CD8-positive, alpha-beta T cell (primary cell): ENCODE measurements at regions of chr3 and their contacts with region 1.

Region 1: DNA sequence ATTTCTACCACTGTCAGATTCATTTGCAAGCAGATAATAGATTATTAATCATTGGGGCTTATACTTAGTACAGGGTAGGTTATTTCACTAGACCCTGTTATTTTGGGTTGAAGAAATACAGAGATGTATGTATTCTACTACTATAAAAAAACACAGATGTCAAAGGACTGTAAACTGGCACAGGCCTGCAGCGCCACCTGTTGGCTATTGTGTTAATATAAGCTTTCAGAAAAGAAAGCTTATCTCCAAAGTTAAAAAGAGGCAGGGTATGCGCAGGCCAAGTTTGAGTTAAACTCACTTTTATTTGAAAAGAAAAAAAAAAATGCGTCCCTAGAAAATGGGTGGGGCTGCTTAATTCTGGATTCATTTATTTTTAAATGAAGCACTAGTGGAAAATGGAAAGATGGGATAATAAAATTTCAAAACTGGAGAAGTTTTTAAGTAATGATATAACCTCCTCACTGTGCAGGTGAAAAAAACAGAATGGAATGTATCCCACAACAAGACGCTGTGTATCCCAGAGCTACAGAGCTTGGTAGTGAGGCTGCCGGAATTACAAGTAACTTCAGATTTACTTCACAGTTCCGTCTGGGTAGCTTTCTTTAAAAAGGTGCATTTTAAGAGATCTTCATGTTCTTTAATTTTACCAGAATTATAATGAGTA is 407.2 kb upstream of the TGFBR2 start:
- DNase-seq: peak; percentile 35 to 79 (median 65)
- ATAC-seq: peak; percentile 46
- H3K4me3 ChIP-seq: no peak overlapping the region
- H3K4me3 Mint-ChIP-seq: no peak overlapping the region
- H3K27ac ChIP-seq: no peak overlapping the region
- H3K27ac Mint-ChIP-seq: no peak overlapping the region
- H3K4me1 ChIP-seq: no peaks in the 10 kb centered on the region
- H3K4me1 Mint-ChIP-seq: no peaks in the 10 kb centered on the region
- H3K27me3 ChIP-seq: no peaks in the 10 kb centered on the region
- H3K27me3 Mint-ChIP-seq: no peaks in the 10 kb centered on the region
- CTCF ChIP-seq: peak; percentile 97

Region 2: GRCh38 chr3:28667646-28668621 is 1531.3 kb before region 1 on chr3:
- CTCF ChIA-PET with region 1: no interaction called
- POLR2A ChIA-PET with region 1: no interaction called
- intact Hi-C with region 1: loop called in 1 of 2 experiments (anchors 5 kb)
- DNase-seq: peak in 6 of 9 experiments; percentile 22 to 50 (median 29)
- ATAC-seq: peak; percentile 29
- H3K4me3 ChIP-seq: no peak overlapping the region
- H3K4me3 Mint-ChIP-seq: no peak overlapping the region
- H3K27ac ChIP-seq: no peak overlapping the region
- H3K27ac Mint-ChIP-seq: no peak overlapping the region
- H3K4me1 ChIP-seq: no peaks in the 10 kb centered on the region
- H3K4me1 Mint-ChIP-seq: no peaks in the 10 kb centered on the region
- H3K27me3 ChIP-seq: no peaks in the 10 kb centered on the region
- H3K27me3 Mint-ChIP-seq: peaks cover 7% of the 10 kb centered on the region
- CTCF ChIP-seq: peak; percentile 62

Region 3: GRCh38 chr3:30012941-30013543 is 186.2 kb before region 1 on chr3:
- CTCF ChIA-PET with region 1: interaction called, 5 read pairs
- POLR2A ChIA-PET with region 1: no interaction called
- intact Hi-C with region 1: loop called in 1 of 2 experiments (anchors 10 kb)
- DNase-seq: peak; percentile 7 to 60 (median 53)
- ATAC-seq: no peak
- H3K4me3 ChIP-seq: no peak overlapping the region
- H3K4me3 Mint-ChIP-seq: no peak overlapping the region
- H3K27ac ChIP-seq: no peak overlapping the region
- H3K27ac Mint-ChIP-seq: no peak overlapping the region
- H3K4me1 ChIP-seq: no peaks in the 10 kb centered on the region
- H3K4me1 Mint-ChIP-seq: no peaks in the 10 kb centered on the region
- H3K27me3 ChIP-seq: no peaks in the 10 kb centered on the region
- H3K27me3 Mint-ChIP-seq: peaks cover 5% of the 10 kb centered on the region
- CTCF ChIP-seq: peak; percentile 72

Region 4: GRCh38 chr3:30112902-30113484 is 86.2 kb before region 1 on chr3:
- CTCF ChIA-PET with region 1: interaction called, 31 read pairs
- POLR2A ChIA-PET with region 1: no interaction called
- intact Hi-C with region 1: loop called (anchors 1 to 2 kb)
- DNase-seq: peak in 2 of 9 experiments; percentile 43 to 61
- ATAC-seq: no peak
- H3K4me3 ChIP-seq: no peak overlapping the region
- H3K4me3 Mint-ChIP-seq: no peak overlapping the region
- H3K27ac ChIP-seq: no peak overlapping the region
- H3K27ac Mint-ChIP-seq: no peak overlapping the region
- H3K4me1 ChIP-seq: no peaks in the 10 kb centered on the region
- H3K4me1 Mint-ChIP-seq: peaks cover 6% of the 10 kb centered on the region
- H3K27me3 ChIP-seq: no peaks in the 10 kb centered on the region
- H3K27me3 Mint-ChIP-seq: no peaks in the 10 kb centered on the region
- CTCF ChIP-seq: peak; percentile 78

Region 5: DNA sequence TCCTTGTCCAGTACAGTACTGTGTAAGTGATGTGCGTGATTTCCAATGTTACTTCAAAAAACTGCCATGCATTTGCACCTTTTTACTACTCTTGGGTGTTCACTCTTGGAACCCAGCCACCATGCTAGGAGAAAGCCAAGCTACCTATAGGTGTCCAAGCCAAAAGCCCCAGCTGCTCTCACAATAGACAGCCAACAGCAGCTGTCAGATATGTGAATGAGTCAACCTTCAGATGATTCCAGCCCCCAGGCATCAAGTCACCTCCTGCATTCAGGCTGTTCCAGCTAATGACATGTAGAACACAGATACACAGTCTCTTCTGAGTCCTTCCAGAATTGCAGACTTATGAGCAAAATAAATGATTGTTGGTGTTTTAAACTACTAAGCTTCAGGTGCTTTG is 10.5 kb before region 1 on chr3:
- CTCF ChIA-PET with region 1: interaction called, 21 read pairs
- POLR2A ChIA-PET with region 1: interaction called, 5 read pairs
- intact Hi-C with region 1: no loop called
- DNase-seq: no peak
- ATAC-seq: no peak
- H3K4me3 ChIP-seq: no peak overlapping the region
- H3K4me3 Mint-ChIP-seq: no peak overlapping the region
- H3K27ac ChIP-seq: no peak overlapping the region
- H3K27ac Mint-ChIP-seq: no peak overlapping the region
- H3K4me1 ChIP-seq: no peaks in the 10 kb centered on the region
- H3K4me1 Mint-ChIP-seq: no peaks in the 10 kb centered on the region
- H3K27me3 ChIP-seq: no peaks in the 10 kb centered on the region
- H3K27me3 Mint-ChIP-seq: peaks cover 3% of the 10 kb centered on the region
- CTCF ChIP-seq: no peak

Region 6: DNA sequence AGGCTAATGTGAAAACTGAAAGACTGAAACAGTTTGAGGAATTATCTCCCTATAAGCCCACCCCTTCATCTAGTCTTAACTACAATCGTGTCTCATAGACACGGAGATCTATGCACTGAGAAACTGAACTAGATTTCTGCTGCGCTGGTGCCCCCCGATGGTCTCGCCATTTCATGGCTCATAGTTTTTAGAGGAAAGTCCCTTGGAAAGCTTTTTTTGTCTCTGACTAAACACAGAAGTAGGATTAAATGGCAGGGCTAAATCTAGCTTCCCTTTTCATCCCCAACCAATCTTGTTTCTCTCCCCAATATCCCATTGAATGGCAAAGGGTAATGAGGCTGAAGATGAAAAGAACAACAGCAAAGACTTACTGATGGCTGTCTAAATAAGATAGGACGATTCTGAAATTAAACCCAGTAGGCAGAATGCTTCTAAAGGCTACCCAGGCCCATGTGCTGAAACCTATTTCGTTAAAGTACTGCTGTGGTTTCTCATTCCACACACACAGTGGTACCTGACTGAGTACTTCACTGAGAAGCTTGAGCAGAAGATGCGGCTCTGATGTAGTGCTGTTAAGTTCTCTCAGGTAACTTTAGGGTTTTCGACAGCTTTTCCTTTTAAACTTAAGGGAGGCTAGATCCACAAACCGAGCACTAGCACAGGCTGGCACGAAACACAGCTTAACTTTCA is 552.5 kb after region 1 on chr3:
- CTCF ChIA-PET with region 1: interaction called, 16 read pairs
- POLR2A ChIA-PET with region 1: no interaction called
- intact Hi-C with region 1: loop called in 1 of 2 experiments (anchors 2 kb)
- DNase-seq: peak; percentile 25 to 76 (median 61)
- ATAC-seq: peak; percentile 73
- H3K4me3 ChIP-seq: no peak overlapping the region
- H3K4me3 Mint-ChIP-seq: no peak overlapping the region
- H3K27ac ChIP-seq: no peak overlapping the region
- H3K27ac Mint-ChIP-seq: no peak overlapping the region
- H3K4me1 ChIP-seq: no peaks in the 10 kb centered on the region
- H3K4me1 Mint-ChIP-seq: peaks cover 10% of the 10 kb centered on the region
- H3K27me3 ChIP-seq: no peaks in the 10 kb centered on the region
- H3K27me3 Mint-ChIP-seq: no peaks in the 10 kb centered on the region
- CTCF ChIP-seq: peak; percentile 55